Activated B cell treated with CpG ODN at 0.5 μM for 24 hours (primary cell): ENCODE measurements at regions of chr3 and their contacts with region 1.

Region 1: GRCh38 chr3:129183569-129184395 is at the start of gene CNBP:
- DNase-seq: peak; percentile 92
- ATAC-seq: peak; percentile 95
- H3K4me3 Mint-ChIP-seq: peak within 1 kb of the TSS; percentile 95
- H3K27ac Mint-ChIP-seq: peak within 1 kb of the TSS; percentile 95
- H3K4me1 Mint-ChIP-seq: peaks cover 50% of the 10 kb centered on the region
- H3K27me3 Mint-ChIP-seq: no peaks in the 10 kb centered on the region
- CTCF ChIP-seq: no peak
- total RNA-seq, gene CNBP: 281 and 303 TPM in 2 replicates

Region 2: DNA sequence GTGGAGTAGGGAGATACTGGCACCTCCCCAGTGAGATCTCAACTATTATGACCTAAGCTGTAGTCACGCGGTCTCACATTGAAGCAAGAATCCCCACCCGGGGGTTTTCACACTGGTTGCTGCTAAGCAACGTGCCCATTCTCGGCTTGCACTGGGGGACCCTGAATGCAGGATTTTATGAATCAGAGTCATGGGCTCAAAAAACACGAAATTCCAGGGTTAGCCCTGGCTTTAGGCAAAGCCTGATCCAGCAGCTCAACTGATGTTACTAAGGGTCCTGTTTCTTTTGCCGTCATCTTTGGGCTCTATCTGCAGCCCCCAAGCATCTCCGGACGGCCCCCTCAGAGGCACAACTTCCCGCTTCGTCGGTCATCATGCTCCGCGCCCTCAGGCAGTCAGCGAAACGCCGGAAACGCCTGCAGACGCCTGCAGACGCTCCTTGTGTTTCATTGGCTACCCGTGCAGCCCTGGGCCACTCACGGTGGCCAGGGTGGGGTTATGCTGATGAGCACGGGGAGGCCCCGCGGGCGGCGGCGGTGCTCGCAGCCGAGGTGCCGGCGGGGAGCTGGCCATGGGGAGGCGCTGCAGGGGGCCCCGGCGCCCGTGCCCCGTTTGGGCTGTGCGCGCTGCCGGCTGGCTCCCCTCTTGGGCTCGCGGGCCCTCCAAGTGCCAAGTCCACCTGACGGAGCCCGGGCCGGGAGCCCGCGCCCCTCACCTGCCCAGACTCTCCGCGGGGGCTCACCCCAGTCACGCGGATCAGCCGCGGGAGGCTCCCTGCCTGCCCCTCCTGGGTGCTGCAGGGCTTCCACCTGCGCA is 156.8 kb before region 1 on chr3:
- CTCF ChIA-PET with region 1: no interaction called
- POLR2A ChIA-PET with region 1: interaction called, 3 read pairs
- intact Hi-C with region 1: loop called (anchors 1 kb)
- DNase-seq: peak; percentile 83
- ATAC-seq: peak; percentile 97
- H3K4me3 Mint-ChIP-seq: peak overlapping the region; percentile 85
- H3K27ac Mint-ChIP-seq: peak overlapping the region; percentile 94
- H3K4me1 Mint-ChIP-seq: peaks cover 12% of the 10 kb centered on the region
- H3K27me3 Mint-ChIP-seq: no peaks in the 10 kb centered on the region
- CTCF ChIP-seq: no peak

Region 3: DNA sequence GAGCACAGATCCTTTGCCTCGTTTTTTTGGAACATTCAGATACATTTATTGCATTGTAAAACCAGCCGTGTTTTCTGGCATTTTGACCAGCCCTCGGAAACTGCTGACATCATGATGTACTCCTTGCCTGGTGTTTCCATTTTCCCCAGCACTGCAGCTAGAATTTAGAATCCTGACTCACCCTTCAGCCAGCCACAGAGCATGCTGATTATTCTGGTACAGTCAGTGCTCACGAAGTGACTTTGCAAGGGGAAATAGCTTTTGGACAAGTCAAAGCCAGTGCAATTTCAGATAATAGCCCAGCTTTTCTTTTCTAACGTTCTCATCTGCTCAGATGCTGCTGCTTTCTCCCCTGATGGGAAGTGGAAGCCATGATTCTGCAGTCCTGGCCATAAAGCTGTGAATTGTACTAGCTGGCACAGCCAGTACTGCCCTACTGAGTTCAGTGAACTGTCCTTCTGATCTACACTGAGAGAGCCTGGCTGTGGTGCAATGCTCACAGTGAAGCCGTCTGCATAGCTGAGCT is 12.0 kb after region 1 on chr3:
- CTCF ChIA-PET with region 1: no interaction called
- POLR2A ChIA-PET with region 1: interaction called, 10 read pairs
- intact Hi-C with region 1: loop called (anchors 2 kb)
- DNase-seq: no peak
- ATAC-seq: no peak
- H3K4me3 Mint-ChIP-seq: no peak overlapping the region
- H3K27ac Mint-ChIP-seq: no peak overlapping the region
- H3K4me1 Mint-ChIP-seq: peaks cover 23% of the 10 kb centered on the region
- H3K27me3 Mint-ChIP-seq: no peaks in the 10 kb centered on the region
- CTCF ChIP-seq: no peak

Region 4: GRCh38 chr3:129233538-129233937 is 49.8 kb after region 1 on chr3:
- CTCF ChIA-PET with region 1: no interaction called
- POLR2A ChIA-PET with region 1: interaction called, 49 read pairs
- intact Hi-C with region 1: loop called (anchors 1 kb)
- DNase-seq: peak; percentile 53
- ATAC-seq: peak; percentile 93
- H3K4me3 Mint-ChIP-seq: peak overlapping the region; percentile 50
- H3K27ac Mint-ChIP-seq: peak overlapping the region; percentile 88
- H3K4me1 Mint-ChIP-seq: peaks cover 52% of the 10 kb centered on the region
- H3K27me3 Mint-ChIP-seq: no peaks in the 10 kb centered on the region
- CTCF ChIP-seq: no peak

Region 5: GRCh38 chr3:129278439-129278970 is 94.7 kb after region 1 on chr3 and contains the start of gene HMCES:
- CTCF ChIA-PET with region 1: no interaction called
- POLR2A ChIA-PET with region 1: interaction called, 6 read pairs
- intact Hi-C with region 1: loop called (anchors 1 kb)
- DNase-seq: peak; percentile 91
- ATAC-seq: peak; percentile 62
- H3K4me3 Mint-ChIP-seq: peak within 1 kb of the TSS; percentile 91
- H3K27ac Mint-ChIP-seq: peak within 1 kb of the TSS; percentile 86
- H3K4me1 Mint-ChIP-seq: peaks cover 80% of the 10 kb centered on the region
- H3K27me3 Mint-ChIP-seq: no peaks in the 10 kb centered on the region
- CTCF ChIP-seq: no peak
- total RNA-seq, gene HMCES: 31.7 and 37.2 TPM in 2 replicates

Region 6: DNA sequence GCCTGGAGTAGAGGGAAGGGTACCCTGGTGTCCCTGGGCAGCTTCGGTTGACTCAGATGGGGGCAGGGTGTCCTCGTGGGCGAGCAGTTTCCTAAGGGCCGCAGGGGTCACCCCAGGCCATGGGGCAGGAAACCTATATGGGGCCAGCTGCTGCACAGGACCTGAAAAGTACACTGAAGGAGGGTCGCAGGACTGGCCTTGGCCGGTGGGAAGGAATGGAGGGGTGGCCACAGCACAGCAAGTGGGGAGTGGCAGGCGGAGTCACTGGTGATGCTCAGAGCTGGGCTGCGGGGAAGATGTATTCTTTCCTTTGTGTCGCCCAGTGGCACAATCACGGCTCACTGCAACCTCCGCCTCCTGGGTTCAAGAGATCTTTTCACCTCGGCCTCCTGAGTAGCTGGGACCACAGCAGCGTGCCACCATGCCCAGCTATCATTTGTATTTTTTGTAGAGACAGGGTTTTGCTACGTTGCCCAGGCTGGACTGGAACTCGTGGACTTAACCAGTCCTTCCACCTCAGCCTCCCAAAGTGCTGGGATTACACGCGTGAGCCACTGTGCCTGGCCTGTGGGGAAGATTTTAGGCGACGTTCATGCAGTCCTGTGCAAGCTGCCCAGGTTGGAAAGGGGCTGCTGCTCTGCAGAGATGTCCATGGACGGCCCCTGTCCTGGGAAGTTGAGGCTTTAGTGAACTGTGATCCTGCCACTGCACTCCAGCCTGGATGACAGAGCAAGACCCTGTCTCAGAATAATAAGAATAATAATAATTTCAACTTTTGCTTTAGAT is 187.5 kb after region 1 on chr3:
- CTCF ChIA-PET with region 1: no interaction called
- POLR2A ChIA-PET with region 1: no interaction called
- intact Hi-C with region 1: no loop called
- DNase-seq: no peak
- ATAC-seq: no peak
- H3K4me3 Mint-ChIP-seq: no peak overlapping the region
- H3K27ac Mint-ChIP-seq: no peak overlapping the region
- H3K4me1 Mint-ChIP-seq: no peaks in the 10 kb centered on the region
- H3K27me3 Mint-ChIP-seq: no peaks in the 10 kb centered on the region
- CTCF ChIP-seq: no peak

Region 7: GRCh38 chr3:130341388-130341787 is 1157.6 kb after region 1 on chr3:
- CTCF ChIA-PET with region 1: no interaction called
- POLR2A ChIA-PET with region 1: no interaction called
- intact Hi-C with region 1: no loop called
- DNase-seq: no peak
- ATAC-seq: no peak
- H3K4me3 Mint-ChIP-seq: no peak overlapping the region
- H3K27ac Mint-ChIP-seq: no peak overlapping the region
- H3K4me1 Mint-ChIP-seq: no peaks in the 10 kb centered on the region
- H3K27me3 Mint-ChIP-seq: peaks cover 17% of the 10 kb centered on the region
- CTCF ChIP-seq: no peak